Prostate gland (tissue), 2 donors: ENCODE measurements at regions of chr2 and their contacts with region 1.

Region 1: GRCh38 chr2:65554765-65555591 is 122.6 kb upstream of the SPRED2 start:
- DNase-seq: no peak
- H3K4me3 ChIP-seq: no peak overlapping the region
- H3K27ac ChIP-seq: no peak overlapping the region
- H3K4me1 ChIP-seq: no peaks in the 10 kb centered on the region
- H3K27me3 ChIP-seq: no peaks in the 10 kb centered on the region
- CTCF ChIP-seq: no peak
- POLR2A ChIP-seq: no peak

Region 2: GRCh38 chr2:65064728-65065552 is 490.0 kb before region 1 on chr2:
- intact Hi-C with region 1: loop called (anchors 5 kb)
- DNase-seq: peak; percentile 62
- H3K4me3 ChIP-seq: no peak overlapping the region
- H3K27ac ChIP-seq: peak overlapping the region; percentile 22 to 50
- H3K4me1 ChIP-seq: peaks cover 7% of the 10 kb centered on the region
- H3K27me3 ChIP-seq: no peaks in the 10 kb centered on the region
- CTCF ChIP-seq: peak; percentile 71 to 91 (median 81)
- POLR2A ChIP-seq: no peak

Region 3: DNA sequence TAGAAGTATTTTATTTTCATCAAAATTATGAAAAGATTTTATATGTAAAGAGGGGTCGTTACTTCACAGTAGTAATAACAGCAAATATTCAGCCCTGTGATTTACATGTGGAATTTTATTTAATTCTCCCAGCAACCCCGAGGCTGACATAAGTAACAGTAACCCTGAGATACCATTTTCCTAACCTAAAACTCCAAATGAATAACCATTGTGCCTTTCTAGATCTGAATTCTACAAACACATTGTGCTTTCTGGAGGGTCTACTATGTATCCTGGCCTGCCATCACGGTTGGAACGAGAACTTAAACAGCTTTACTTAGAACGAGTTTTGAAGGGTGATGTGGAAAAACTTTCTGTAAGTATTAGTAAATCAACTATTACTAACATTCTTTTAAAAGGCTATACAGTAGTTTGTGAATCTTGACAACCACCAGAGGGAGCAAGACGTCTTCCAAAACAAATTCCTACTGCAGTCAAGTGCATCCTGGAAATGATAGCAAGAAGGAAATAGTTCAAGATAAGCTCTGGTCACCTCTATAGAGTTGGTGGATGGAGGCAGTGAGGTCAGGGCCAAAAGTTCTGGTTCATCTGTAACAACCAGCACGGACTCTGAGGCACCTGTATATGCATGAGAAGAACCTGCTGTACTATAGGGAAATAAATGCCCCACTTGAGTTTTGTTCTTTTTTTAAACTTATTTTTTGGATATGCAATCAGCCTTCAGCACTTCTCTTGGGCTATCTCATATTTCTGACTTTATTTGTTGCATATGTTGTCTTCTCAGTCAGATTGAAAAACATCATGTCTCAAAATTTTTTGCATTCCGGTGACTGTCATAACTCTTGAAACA is 289.9 kb before region 1 on chr2:
- intact Hi-C with region 1: loop called (anchors 2 kb)
- DNase-seq: peak; percentile 66
- H3K4me3 ChIP-seq: no peak overlapping the region
- H3K27ac ChIP-seq: no peak overlapping the region
- H3K4me1 ChIP-seq: no peaks in the 10 kb centered on the region
- H3K27me3 ChIP-seq: no peaks in the 10 kb centered on the region
- CTCF ChIP-seq: peak; percentile 44 to 85 (median 79)
- POLR2A ChIP-seq: no peak

Region 4: GRCh38 chr2:65432227-65433190 is 122.5 kb before region 1 on chr2 and contains the start of gene SPRED2:
- intact Hi-C with region 1: loop called (anchors 5 kb)
- DNase-seq: peak; percentile 92
- H3K4me3 ChIP-seq: peak within 1 kb of the TSS; percentile 88 to 92
- H3K27ac ChIP-seq: peak within 1 kb of the TSS; percentile 92 to 96
- H3K4me1 ChIP-seq: peaks cover 4% of the 10 kb centered on the region
- H3K27me3 ChIP-seq: no peaks in the 10 kb centered on the region
- CTCF ChIP-seq: peak in 2 of 4 experiments; percentile 8 to 45
- POLR2A ChIP-seq: peak; percentile 60
- total RNA-seq, gene SPRED2: 23.7 to 27.1 TPM